AG04450 (cell line): ENCODE measurements at regions of chr16 and their contacts with region 1.

Region 1: GRCh38 chr16:14310519-14310991 is 239.4 kb downstream of the MRTFB start:
- DNase-seq: no peak
- H3K4me3 ChIP-seq: peak overlapping the region; percentile 31
- H3K27ac ChIP-seq: peak overlapping the region; percentile 47
- H3K27me3 ChIP-seq: no peaks in the 10 kb centered on the region
- CTCF ChIP-seq: peak; percentile 27

Region 2: DNA sequence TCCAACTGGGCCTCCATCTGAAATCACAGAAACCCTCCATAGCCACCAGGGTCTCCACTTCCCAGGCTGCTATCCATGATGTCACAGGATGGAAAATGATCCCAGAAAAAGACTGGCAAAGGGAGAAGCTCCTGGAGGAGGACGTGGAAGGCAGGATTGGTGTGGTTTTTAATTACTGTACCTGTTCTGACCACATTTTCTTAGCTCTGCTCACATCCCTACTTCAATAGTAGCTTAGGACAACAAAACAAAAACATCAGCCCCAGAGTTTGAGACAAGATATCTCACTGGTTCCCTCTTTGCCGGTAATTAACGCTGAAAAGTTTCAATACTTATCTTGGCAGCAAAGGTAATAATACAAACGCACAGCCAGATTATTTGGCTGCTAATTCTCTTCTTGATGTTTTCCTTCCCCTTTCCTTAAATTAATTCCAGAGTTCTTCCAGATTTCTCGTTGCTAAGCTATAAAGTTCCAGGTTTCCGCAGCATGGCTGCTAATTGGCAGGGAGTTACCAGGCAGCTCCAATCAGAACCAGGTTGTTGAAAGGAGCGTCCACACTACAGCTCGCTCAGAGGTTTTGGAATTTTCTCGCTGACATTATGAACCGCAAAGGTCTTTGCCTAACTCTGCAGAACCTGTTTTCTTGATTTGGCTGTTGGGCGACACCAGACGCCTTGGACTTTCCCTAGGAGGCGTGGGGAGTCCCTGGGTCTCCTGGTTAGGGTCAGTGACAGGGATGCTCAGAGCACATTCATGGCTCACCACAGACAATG is 24.0 kb after region 1 on chr16:
- CTCF ChIA-PET with region 1: no interaction called
- POLR2A ChIA-PET with region 1: no interaction called
- DNase-seq: no peak
- H3K4me3 ChIP-seq: no peak overlapping the region
- H3K27ac ChIP-seq: no peak overlapping the region
- H3K27me3 ChIP-seq: no peaks in the 10 kb centered on the region
- CTCF ChIP-seq: no peak

Region 3: GRCh38 chr16:14475370-14476139 is 165.0 kb after region 1 on chr16:
- CTCF ChIA-PET with region 1: no interaction called
- POLR2A ChIA-PET with region 1: no interaction called
- DNase-seq: no peak
- H3K4me3 ChIP-seq: no peak overlapping the region
- H3K27ac ChIP-seq: no peak overlapping the region
- H3K27me3 ChIP-seq: no peaks in the 10 kb centered on the region
- CTCF ChIP-seq: no peak

Region 4: GRCh38 chr16:14529010-14529669 is 218.6 kb after region 1 on chr16:
- CTCF ChIA-PET with region 1: interaction called, 8 read pairs
- POLR2A ChIA-PET with region 1: interaction called, 13 read pairs
- DNase-seq: peak; percentile 83
- H3K4me3 ChIP-seq: peak overlapping the region; percentile 17; the same call in 1 of the 2 replicates
- H3K27ac ChIP-seq: peak overlapping the region; percentile 73
- H3K27me3 ChIP-seq: no peaks in the 10 kb centered on the region
- CTCF ChIP-seq: peak; percentile 77